ENCODE measurements at regions of chr15 and their contacts with region 1.

Region 1: DNA sequence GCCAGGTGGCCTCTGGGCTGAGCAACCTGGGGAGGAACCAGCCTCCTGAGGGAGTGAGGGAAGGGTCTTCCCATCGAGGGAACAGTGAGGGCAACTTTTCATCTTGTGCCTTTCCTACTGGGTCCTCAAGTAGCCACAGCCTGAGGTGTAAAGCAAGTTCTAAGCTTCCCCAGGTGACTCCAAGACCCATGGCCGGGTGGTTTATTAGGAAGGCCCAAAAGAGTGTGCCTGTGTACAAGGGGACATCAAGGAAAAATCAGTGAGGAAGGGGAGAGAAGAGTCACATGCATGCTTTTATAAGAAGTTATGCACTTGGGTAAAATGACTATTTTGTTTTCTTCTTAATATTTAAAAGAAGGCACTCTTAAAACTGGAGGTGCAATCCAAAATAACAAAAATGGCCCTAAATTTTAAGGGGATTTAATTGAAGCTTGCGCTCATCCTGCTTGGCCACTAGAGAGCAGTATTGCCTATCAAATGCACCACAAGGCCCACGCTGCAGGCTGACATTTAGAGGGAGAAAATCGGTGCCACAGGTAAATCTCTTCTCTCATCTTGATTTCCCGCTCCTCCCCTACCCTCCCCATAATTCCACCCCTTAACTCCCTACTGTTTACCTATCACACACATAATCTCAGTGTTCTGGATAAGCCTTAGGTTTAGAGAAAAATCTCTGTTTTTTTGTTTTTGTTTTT is 6.7 kb downstream of the NANOGP8 start:
- DNase-seq: peak; percentile 54
- H3K4me3 ChIP-seq: no peak overlapping the region
- H3K27ac ChIP-seq: no peak overlapping the region
- H3K4me1 ChIP-seq: no peaks in the 10 kb centered on the region
- H3K27me3 ChIP-seq: peaks cover 3 to 4% of the 10 kb centered on the region in 2 experiments
- CTCF ChIP-seq: peak; percentile 72 to 73
- POLR2A ChIP-seq: no peak

Region 2: DNA sequence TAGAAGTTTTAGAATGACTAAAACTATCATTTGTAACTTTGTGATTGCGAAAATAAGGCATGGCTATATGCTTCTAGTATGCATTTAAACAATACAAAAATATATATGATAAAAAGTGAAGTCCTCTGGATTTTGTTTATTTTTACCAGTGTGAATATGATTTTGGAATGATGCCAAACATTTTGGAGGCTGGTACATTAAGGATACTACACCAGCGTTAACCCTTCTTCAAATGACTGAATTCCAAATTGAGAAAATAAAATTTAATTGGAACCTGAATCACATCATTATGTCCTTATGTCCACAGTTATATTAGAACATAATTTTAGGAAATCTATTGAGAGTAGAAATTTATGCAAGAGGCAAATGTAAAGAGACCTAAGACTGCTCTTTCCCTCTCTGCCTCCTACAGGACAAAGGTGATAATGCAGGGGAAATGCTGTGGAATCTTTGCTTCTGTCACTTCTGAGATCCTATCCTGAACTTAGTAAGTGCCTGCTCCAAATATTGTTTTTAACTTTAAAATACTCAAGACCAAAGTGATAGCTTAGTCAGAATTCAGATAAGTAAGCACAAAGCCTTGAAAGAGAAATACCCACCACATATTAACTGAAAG is 127.8 kb after region 1 on chr15:
- CTCF ChIA-PET with region 1: interaction called, 3 read pairs
- POLR2A ChIA-PET with region 1: no interaction called
- dilution Hi-C with region 1: no loop called
- intact Hi-C with region 1: loop called (anchors 1 kb)
- DNase-seq: peak; percentile 20
- H3K4me3 ChIP-seq: no peak overlapping the region
- H3K27ac ChIP-seq: no peak overlapping the region
- H3K4me1 ChIP-seq: no peaks in the 10 kb centered on the region
- H3K27me3 ChIP-seq: no peaks in the 10 kb centered on the region
- CTCF ChIP-seq: peak; percentile 36 to 41
- POLR2A ChIP-seq: no peak

Measured in endothelial cell of umbilical vein (primary cell).